Dendritic cell treated with granulocyte-macrophage colony-stimulating factor and Interleukin-4, amounts not matched to agents 40 ng/mL and 50 ng/mL, for 4 days (primary cell): ENCODE measurements at regions of chr5 and their contacts with region 1.

Region 1: GRCh38 chr5:135457424-135458071 is 5.4 kb upstream of the TIFAB start:
- H3K4me3 Mint-ChIP-seq: no peak overlapping the region
- H3K27ac Mint-ChIP-seq: peak overlapping the region; percentile 92
- H3K4me1 Mint-ChIP-seq: peaks cover 74% of the 10 kb centered on the region
- H3K27me3 Mint-ChIP-seq: peaks cover 3% of the 10 kb centered on the region

Region 2: DNA sequence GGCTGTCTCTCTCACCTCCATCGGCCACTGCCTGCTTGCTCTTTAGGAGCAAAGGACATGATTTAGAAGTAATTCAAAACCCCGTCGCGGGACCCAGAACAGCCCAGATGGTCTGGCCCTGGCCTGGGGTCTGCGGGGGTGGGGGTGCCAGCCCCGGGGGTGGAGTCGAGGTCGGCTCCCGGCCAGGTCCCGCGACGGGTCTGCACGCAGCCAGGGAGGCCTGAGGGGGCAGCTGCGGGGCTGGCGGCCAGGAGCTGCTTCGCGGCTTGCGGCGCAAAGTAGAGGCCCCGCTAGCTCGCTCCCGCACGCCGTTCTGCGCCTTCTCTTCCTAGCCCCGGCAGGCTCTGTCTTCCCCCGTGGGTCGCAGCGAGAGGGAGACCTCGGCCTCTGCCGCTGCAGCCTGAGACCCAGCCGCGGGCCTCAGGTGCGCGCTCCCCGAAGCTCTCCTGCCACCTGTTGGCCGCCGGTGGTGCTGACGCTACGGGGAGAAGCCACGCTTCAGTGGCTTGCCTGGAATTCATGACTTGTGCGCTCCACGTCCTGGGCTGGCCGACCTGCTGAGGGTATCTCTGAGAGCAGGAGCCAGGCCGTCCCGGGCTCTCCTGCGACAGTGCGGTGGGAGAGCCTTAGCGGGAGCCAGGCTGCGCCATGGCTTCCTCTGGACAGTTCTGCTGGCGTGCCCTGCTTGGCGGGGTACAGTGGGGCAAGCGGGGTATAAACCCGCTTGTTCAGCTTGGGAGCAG is 266.3 kb before region 1 on chr5:
- intact Hi-C with region 1: no loop called
- H3K4me3 Mint-ChIP-seq: peak overlapping the region; percentile 88
- H3K27ac Mint-ChIP-seq: peak overlapping the region; percentile 73
- H3K4me1 Mint-ChIP-seq: peaks cover 13% of the 10 kb centered on the region
- H3K27me3 Mint-ChIP-seq: peaks cover 74% of the 10 kb centered on the region

Region 3: GRCh38 chr5:135392256-135392655 is 65.3 kb before region 1 on chr5:
- intact Hi-C with region 1: loop called (anchors 2 kb)
- H3K4me3 Mint-ChIP-seq: peak overlapping the region; percentile 61
- H3K27ac Mint-ChIP-seq: peak overlapping the region; percentile 98
- H3K4me1 Mint-ChIP-seq: peaks cover 97% of the 10 kb centered on the region
- H3K27me3 Mint-ChIP-seq: no peaks in the 10 kb centered on the region